ENCODE measurements at regions of chr2 and their contacts with region 1.

Region 1: DNA sequence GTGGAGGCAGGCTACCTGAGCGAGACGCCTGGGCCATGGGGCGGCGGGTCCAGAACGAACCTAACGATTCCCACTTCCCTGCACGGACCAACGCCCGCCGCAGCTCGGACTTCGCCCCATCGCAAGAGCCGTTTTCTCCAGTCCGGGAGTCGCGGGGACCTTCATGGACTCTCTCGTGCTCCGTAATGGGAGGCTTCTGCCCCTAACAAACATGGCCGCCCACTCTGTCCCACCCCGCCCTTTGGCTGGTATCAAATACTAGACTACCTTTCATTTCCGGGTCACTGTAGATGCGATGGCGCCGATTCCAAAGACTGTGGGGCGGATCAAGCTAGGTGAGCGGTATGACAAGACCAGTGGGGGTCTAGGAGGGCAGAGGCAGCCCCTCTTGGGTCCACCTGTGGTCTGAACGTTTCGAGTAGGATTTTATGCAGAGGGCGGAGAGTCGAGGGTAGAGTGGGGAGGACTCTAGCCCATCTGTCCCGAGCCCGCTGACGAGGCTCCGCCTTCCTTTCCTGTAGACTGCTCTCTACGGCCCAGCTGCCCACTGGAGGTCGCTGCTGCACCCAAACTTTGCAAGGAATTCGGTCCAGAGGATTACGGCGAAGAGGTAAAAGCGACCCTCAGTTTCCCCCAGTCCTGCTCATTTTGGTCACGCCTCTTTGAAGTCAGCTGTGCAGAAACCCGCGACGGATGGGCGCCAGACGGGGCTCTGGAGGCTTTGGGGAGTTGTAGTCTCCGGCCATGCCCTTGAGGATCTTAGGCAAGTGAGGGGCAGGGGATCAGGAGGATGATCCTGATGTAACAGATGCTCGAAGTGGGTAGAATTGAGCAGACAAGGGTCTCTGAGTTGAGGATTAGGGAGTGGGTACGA is at the starts of genes CCDC142 and TTC31:
- DNase-seq: peak; percentile 96 to 98 (median 97)
- ATAC-seq: peak; percentile 96
- H3K4me3 ChIP-seq: peak within 1 kb of the TSS; percentile 38
- H3K4me1 ChIP-seq: peaks cover 20% of the 10 kb centered on the region
- CTCF ChIP-seq: peak; percentile 73
- total RNA-seq, gene CCDC142: 22.6 to 36.5 (median 28.5) TPM
- total RNA-seq, gene TTC31: 27.2 to 34.1 (median 30.9) TPM

Region 2: GRCh38 chr2:72613931-72614330 is 1869.1 kb before region 1 on chr2:
- intact Hi-C with region 1: no loop called
- DNase-seq: no peak
- ATAC-seq: no peak
- H3K4me3 ChIP-seq: no peak overlapping the region
- H3K4me1 ChIP-seq: no peaks in the 10 kb centered on the region
- CTCF ChIP-seq: no peak

Region 3: GRCh38 chr2:73859721-73860586 is 623.1 kb before region 1 on chr2:
- intact Hi-C with region 1: no loop called
- DNase-seq: no peak
- ATAC-seq: peak; percentile 45
- H3K4me3 ChIP-seq: no peak overlapping the region
- H3K4me1 ChIP-seq: no peaks in the 10 kb centered on the region
- CTCF ChIP-seq: no peak

Region 4: GRCh38 chr2:74529357-74530238 is 46.6 kb after region 1 on chr2 and contains the starts of genes AUP1 and HTRA2:
- intact Hi-C with region 1: loop called in 1 of 2 experiments (anchors 10 kb)
- DNase-seq: peak; percentile 98 to 99 (median 98)
- ATAC-seq: peak; percentile 90
- H3K4me3 ChIP-seq: peak within 1 kb of the TSS; percentile 79
- H3K4me1 ChIP-seq: peaks cover 11% of the 10 kb centered on the region
- CTCF ChIP-seq: no peak
- total RNA-seq, gene AUP1: 108 to 179 (median 129) TPM
- total RNA-seq, gene HTRA2: 22.2 to 37.1 (median 23.3) TPM

Region 5: DNA sequence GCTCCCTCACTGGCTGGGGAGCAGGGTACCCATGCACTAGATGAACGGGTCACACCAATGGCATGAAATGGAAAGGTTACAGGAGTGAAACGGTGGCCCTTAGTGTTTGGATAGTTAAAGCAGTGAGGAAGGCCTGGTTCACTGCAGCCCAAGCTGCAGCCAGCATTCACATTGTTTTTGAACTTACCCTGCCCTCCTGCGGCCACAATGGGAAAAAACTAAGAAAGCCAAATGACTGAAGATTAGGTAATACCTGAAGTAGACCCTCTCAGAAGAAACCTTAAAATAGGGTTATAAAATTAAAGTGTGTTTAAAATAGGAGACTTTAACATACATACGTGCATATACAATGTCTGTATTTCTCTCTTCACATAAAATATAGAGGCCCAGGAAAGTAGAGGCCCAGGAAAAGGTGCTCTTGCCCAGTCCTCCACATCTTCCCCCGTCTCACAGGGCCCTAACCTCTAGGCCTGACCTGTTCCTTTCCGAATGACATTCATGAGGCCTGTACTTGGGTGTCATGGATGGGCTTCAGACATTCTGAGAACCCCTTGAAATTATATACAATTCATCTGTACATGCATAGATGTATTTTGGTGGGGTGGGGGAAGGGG is 104.7 kb after region 1 on chr2:
- intact Hi-C with region 1: loop called (anchors 1 to 5 kb)
- DNase-seq: peak in 2 of 3 donors; percentile 59 to 77
- ATAC-seq: peak; percentile 88
- H3K4me3 ChIP-seq: no peak overlapping the region
- H3K4me1 ChIP-seq: no peaks in the 10 kb centered on the region
- CTCF ChIP-seq: no peak

Region 6: DNA sequence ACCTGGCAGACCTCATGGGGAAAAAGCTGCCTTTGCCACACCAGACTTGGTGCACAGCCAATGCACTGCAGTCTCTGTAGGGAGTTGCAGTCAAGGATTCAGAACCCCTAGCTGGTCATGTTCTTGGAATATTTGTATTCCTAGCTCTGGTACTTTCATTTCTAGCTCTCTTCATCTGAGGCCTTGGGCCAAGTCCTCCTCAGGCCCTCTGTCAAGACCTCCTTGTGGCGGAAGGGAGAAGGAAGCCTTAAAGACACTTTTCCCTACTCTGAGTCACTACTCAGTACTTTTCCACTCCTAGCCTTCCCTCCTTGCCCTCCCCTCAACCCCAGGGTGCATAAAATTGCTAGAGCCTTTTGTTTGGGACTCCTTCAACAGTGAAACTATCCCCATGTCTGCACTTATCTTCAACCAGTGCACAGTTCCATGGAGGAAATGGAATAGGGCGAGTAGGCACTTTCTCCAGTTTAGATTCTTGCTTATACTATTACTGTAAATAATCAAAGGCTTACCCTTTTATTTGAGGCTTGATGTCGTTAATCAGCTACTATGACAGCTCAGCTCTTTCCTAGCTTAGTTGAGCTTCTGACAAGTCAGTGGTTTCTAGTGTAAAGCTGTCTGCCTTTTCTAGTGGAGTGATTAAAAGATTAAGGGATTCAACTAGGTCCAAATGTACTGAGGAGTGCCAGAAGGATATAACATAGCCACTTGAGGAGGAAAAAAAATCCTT is 149.3 kb after region 1 on chr2:
- intact Hi-C with region 1: no loop called
- DNase-seq: no peak
- ATAC-seq: no peak
- H3K4me3 ChIP-seq: no peak overlapping the region
- H3K4me1 ChIP-seq: no peaks in the 10 kb centered on the region
- CTCF ChIP-seq: no peak

Measured in mucosa of descending colon (tissue), 3 donors.